ENCODE measurements at regions of chr13 and their contacts with region 1.

Region 1: DNA sequence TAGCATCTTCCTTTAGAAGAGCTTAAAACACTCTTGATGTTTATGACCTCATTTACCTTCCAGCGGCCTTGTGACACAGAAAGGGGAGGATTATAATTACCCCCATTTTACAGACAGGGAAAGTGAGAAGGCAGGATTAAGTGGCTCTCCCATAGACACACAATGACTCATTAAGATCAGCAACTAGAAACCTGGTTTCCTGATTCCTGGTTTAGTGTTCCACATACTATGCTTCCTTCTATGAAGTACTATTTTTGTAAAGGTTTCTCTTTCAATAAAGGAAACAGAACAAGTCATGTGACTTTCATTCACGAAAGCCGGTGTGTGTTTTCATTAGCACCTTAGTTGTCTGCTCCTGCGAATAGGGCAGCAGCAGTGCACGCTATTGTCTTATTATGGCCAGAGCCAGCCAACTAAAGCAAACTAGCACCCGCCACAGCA is 8.3 kb downstream of the IRS2 start:
- DNase-seq: peak in 4 of 14 experiments; percentile 18 to 48 (median 40)
- ATAC-seq: no peak
- H3K4me3 ChIP-seq: no peak overlapping the region
- H3K4me3 Mint-ChIP-seq: peak overlapping the region; percentile 68
- H3K27ac ChIP-seq: no peak overlapping the region
- H3K27ac Mint-ChIP-seq: peak overlapping the region; percentile 63
- H3K4me1 ChIP-seq: peaks cover 49% of the 10 kb centered on the region
- H3K4me1 Mint-ChIP-seq: peaks cover 65% of the 10 kb centered on the region
- H3K27me3 ChIP-seq: no peaks in the 10 kb centered on the region
- H3K27me3 Mint-ChIP-seq: no peaks in the 10 kb centered on the region
- CTCF ChIP-seq: no peak

Region 2: DNA sequence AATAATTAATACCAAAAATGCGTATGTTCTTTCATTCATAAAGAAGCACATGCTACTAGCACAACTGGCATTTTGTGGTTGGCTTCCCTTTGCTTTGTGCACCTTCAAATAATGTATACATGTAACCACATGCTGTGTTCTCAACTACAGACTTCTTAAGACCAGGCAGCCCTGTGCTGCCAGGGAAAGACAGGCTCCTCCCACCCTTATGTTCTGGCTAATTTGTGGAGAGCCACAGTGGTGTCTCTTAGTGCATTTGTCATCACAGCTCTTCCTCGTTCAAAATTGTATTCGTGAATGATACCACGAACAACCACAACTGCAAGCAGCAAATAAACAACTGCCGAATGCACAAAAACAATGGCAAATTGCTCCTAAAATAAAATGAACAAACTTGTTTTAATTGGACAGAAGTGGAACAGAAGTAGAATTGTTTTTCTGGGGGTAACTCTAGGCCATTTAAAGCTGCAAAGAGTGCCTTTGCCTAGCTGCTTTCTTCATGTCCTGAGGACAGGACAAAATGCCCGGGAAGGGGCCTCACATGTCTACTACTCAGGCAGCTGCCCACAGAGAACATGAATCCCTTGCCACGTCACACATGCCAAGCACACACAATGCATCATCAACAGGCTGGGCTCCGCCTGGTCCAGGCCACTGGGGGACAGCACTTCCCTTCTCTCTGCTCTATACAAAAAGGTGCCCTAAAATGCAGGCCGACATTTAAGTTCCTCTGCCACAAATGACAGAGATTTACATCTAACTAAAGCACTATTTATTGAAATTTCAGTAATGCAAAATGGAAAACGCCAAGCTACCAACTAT is 13.4 kb before region 1 on chr13:
- CTCF ChIA-PET with region 1: no interaction called
- POLR2A ChIA-PET with region 1: interaction called, 3 read pairs
- intact Hi-C with region 1: loop called in 1 of 2 experiments (anchors 2 kb)
- DNase-seq: peak in 5 of 14 experiments; percentile 13 to 60 (median 42)
- ATAC-seq: peak; percentile 45
- H3K4me3 ChIP-seq: no peak overlapping the region
- H3K4me3 Mint-ChIP-seq: peak overlapping the region; percentile 31
- H3K27ac ChIP-seq: no peak overlapping the region
- H3K27ac Mint-ChIP-seq: no peak overlapping the region
- H3K4me1 ChIP-seq: peaks cover 18% of the 10 kb centered on the region
- H3K4me1 Mint-ChIP-seq: peaks cover 78% of the 10 kb centered on the region
- H3K27me3 ChIP-seq: no peaks in the 10 kb centered on the region
- H3K27me3 Mint-ChIP-seq: no peaks in the 10 kb centered on the region
- CTCF ChIP-seq: peak; percentile 29

Region 3: GRCh38 chr13:109816112-109816818 is 38.1 kb after region 1 on chr13:
- CTCF ChIA-PET with region 1: no interaction called
- POLR2A ChIA-PET with region 1: no interaction called
- intact Hi-C with region 1: no loop called
- DNase-seq: no peak
- ATAC-seq: no peak
- H3K4me3 ChIP-seq: no peak overlapping the region
- H3K4me3 Mint-ChIP-seq: no peak overlapping the region
- H3K27ac ChIP-seq: no peak overlapping the region
- H3K27ac Mint-ChIP-seq: no peak overlapping the region
- H3K4me1 ChIP-seq: no peaks in the 10 kb centered on the region
- H3K4me1 Mint-ChIP-seq: no peaks in the 10 kb centered on the region
- H3K27me3 ChIP-seq: peaks cover 0 to 4% of the 10 kb centered on the region in 2 experiments
- H3K27me3 Mint-ChIP-seq: peaks cover 45% of the 10 kb centered on the region
- CTCF ChIP-seq: no peak

Region 4: DNA sequence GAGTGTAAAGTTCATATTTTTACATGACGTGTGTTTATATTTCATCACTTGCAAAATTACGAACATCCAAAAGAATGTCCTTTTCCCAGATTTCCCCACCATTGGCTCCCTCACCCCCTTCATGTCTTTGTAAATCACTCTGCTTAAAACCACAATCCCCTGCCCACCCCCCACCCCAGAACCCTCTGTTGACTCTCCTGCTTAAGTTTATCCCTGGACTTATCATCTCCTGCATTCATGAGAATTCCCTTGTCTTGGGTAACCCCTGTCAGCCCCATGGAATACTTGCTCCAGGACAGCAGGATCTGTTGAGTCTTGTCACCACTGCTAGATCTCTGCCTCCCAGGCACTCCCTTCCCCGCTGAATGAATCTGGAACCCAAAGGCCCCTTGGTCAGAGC is 418.9 kb after region 1 on chr13:
- CTCF ChIA-PET with region 1: no interaction called
- POLR2A ChIA-PET with region 1: no interaction called
- intact Hi-C with region 1: no loop called
- DNase-seq: no peak
- ATAC-seq: no peak
- H3K4me3 ChIP-seq: no peak overlapping the region
- H3K4me3 Mint-ChIP-seq: no peak overlapping the region
- H3K27ac ChIP-seq: no peak overlapping the region
- H3K27ac Mint-ChIP-seq: no peak overlapping the region
- H3K4me1 ChIP-seq: no peaks in the 10 kb centered on the region
- H3K4me1 Mint-ChIP-seq: no peaks in the 10 kb centered on the region
- H3K27me3 ChIP-seq: peaks cover 0 to 3% of the 10 kb centered on the region in 2 experiments
- H3K27me3 Mint-ChIP-seq: peaks cover 30% of the 10 kb centered on the region
- CTCF ChIP-seq: no peak

Measured in CD4-positive, alpha-beta T cell (primary cell).